ENCODE measurements at regions of chr3 and their contacts with region 1.

Region 1: GRCh38 chr3:9916734-9917680 is at the start of gene IL17RC:
- DNase-seq: peak; percentile 35
- ATAC-seq: peak; percentile 16
- H3K4me3 ChIP-seq: peak within 1 kb of the TSS in 4 of 5 experiments; percentile 32 to 72 (median 50)
- H3K4me3 Mint-ChIP-seq: peak within 1 kb of the TSS; percentile 83
- H3K27ac ChIP-seq: no peak within 1 kb of the TSS
- H3K27ac Mint-ChIP-seq: no peak within 1 kb of the TSS
- H3K4me1 ChIP-seq: peaks cover 17 to 20% of the 10 kb centered on the region in 2 donors
- H3K4me1 Mint-ChIP-seq: peaks cover 15% of the 10 kb centered on the region
- H3K27me3 ChIP-seq: peaks cover 0 to 29% (median 9%) of the 10 kb centered on the region in 4 experiments
- H3K27me3 Mint-ChIP-seq: peaks cover 8% of the 10 kb centered on the region
- CTCF ChIP-seq: no peak
- total RNA-seq, gene IL17RC: 0.24 and 0.25 TPM in 2 replicates

Region 2: DNA sequence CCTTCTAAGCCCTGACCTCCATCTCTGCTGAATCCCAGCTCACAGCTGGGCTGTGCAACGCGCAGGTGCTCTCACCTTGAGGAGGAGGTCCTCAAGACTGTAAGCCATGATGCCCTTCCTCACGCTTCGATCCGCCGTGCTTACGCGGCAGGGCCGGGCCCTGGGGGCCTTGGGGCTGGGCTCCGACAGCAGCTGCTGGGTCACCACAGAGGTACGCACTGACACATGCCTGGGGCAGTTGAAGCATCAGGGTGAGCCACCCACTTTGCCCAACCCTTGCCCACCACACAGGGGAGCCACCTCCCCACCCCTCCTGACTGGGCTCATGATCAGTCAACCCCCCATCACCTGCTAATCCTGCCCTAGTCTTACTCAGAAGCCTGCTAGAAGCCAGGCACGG is 40.0 kb before region 1 on chr3:
- CTCF ChIA-PET with region 1: no interaction called
- POLR2A ChIA-PET with region 1: no interaction called
- intact Hi-C with region 1: no loop called
- DNase-seq: no peak
- ATAC-seq: no peak
- H3K4me3 ChIP-seq: no peak overlapping the region
- H3K4me3 Mint-ChIP-seq: no peak overlapping the region
- H3K27ac ChIP-seq: no peak overlapping the region
- H3K27ac Mint-ChIP-seq: no peak overlapping the region
- H3K4me1 ChIP-seq: no peaks in the 10 kb centered on the region
- H3K4me1 Mint-ChIP-seq: no peaks in the 10 kb centered on the region
- H3K27me3 ChIP-seq: no peaks in the 10 kb centered on the region
- H3K27me3 Mint-ChIP-seq: peaks cover 14% of the 10 kb centered on the region
- CTCF ChIP-seq: no peak

Region 3: GRCh38 chr3:10085736-10086135 is 168.7 kb after region 1 on chr3:
- CTCF ChIA-PET with region 1: no interaction called
- POLR2A ChIA-PET with region 1: interaction called, 14 read pairs
- intact Hi-C with region 1: no loop called
- DNase-seq: no peak
- ATAC-seq: no peak
- H3K4me3 ChIP-seq: no peak overlapping the region
- H3K4me3 Mint-ChIP-seq: no peak overlapping the region
- H3K27ac ChIP-seq: no peak overlapping the region
- H3K27ac Mint-ChIP-seq: no peak overlapping the region
- H3K4me1 ChIP-seq: no peaks in the 10 kb centered on the region
- H3K4me1 Mint-ChIP-seq: no peaks in the 10 kb centered on the region
- H3K27me3 ChIP-seq: no peaks in the 10 kb centered on the region
- H3K27me3 Mint-ChIP-seq: no peaks in the 10 kb centered on the region
- CTCF ChIP-seq: no peak